GM10248 (cell line): ENCODE measurements at regions of chr11 and their contacts with region 1.

Region 1: DNA sequence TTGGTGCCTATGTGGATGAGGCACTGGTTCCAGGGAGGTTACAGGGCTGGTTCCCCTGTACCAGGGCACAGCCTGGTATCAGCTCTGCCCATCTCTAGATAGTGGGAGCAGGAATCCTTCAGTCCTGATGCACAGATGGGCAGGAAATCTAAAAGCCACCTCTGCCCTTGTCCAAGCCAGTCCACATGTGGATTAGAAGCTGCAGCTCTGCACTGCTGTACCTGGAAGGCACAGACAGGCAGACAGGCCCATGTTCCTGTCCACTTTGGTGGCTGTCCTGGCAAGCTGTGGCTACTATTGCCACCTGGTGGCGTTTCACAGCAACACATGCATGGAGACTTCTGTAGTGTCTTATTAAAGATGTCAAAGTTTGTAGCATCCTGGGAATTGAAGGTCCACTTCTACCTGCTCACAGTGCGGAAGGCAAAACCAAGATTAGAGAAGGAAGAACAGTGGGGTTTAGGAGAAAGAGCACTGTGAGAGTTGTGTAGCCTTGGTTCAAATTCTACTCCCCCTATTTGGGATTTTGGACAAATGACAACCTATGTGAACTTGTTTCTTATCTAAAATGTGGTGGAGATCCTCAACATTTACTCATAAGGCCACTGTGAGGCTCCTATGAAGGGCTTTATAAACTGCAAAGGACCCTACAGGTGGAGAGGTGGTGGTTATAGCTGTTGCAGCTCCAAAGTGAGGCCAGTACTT is 30.1 kb downstream of the NAV2 start:
- DNase-seq: peak; percentile 40
- CTCF ChIP-seq: peak; percentile 82

Region 2: GRCh38 chr11:19546325-19546724 is 196.4 kb before region 1 on chr11:
- CTCF ChIA-PET with region 1: interaction called, 13 read pairs
- POLR2A ChIA-PET with region 1: no interaction called
- DNase-seq: no peak
- CTCF ChIP-seq: no peak

Region 3: GRCh38 chr11:19561011-19561410 is 181.7 kb before region 1 on chr11:
- CTCF ChIA-PET with region 1: interaction called, 118 read pairs
- POLR2A ChIA-PET with region 1: no interaction called
- DNase-seq: no peak
- CTCF ChIP-seq: no peak

Region 4: DNA sequence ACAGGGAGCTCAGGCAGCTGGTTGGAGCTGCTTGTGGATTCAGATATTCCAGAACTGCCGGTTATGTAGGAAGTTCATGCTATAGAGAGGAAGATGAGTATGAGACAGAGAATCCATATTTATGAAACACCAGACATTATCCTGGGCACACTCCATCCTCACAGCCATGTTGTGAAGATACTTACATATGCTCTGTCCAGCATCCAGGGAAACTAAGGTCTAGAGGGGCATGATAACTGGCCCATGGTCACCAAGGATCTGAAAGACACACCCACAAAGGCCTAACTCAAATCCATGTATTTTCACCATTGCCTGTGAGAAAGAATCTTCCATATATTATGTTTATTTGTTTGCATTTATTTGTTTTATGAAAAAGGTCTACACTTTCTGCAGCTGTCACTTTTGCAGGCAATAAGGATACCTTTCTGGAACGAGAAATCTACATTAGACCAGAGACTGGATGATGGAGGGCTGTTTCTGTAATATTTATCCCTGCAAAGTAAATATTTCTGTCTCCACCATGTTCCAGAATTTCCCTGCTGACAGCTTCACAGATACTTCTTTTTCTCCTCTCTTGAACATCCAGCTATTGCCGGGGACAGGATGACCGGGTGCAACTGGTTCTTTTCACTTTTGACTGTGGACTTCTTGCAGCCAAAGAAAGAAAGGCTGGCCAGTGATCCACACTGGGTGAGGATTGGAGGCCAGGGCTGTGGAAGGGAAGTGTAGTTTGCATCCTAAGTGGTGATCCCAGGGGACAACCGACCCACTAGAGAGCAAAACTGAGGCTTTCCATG is 176.0 kb before region 1 on chr11:
- CTCF ChIA-PET with region 1: interaction called, 118 read pairs
- POLR2A ChIA-PET with region 1: no interaction called
- DNase-seq: no peak
- CTCF ChIP-seq: no peak

Region 5: GRCh38 chr11:19577391-19577975 is 165.3 kb before region 1 on chr11:
- CTCF ChIA-PET with region 1: interaction called, 10 read pairs
- POLR2A ChIA-PET with region 1: no interaction called
- DNase-seq: no peak
- CTCF ChIP-seq: no peak

Region 6: DNA sequence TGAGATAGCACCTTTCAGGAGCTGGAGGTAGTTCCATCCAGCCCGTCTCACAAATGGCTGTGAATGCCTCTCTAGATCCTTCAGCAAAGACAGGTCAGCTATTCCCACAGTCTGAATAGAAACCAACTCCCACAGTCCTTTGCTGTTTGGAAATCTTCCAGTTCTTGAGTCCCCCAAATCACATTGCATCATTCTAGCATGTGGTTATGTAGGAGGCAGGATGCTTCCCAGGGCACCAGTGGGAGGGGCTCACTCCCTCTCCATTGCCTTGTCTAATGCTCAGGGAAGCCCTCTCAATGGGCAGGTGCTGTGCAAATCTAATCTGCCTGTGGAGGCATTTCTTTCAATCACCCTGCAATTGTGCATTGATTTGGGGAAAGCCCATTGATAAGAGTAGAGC is 15.5 kb before region 1 on chr11:
- CTCF ChIA-PET with region 1: interaction called, 21 read pairs
- POLR2A ChIA-PET with region 1: no interaction called
- DNase-seq: no peak
- CTCF ChIP-seq: no peak

Region 7: DNA sequence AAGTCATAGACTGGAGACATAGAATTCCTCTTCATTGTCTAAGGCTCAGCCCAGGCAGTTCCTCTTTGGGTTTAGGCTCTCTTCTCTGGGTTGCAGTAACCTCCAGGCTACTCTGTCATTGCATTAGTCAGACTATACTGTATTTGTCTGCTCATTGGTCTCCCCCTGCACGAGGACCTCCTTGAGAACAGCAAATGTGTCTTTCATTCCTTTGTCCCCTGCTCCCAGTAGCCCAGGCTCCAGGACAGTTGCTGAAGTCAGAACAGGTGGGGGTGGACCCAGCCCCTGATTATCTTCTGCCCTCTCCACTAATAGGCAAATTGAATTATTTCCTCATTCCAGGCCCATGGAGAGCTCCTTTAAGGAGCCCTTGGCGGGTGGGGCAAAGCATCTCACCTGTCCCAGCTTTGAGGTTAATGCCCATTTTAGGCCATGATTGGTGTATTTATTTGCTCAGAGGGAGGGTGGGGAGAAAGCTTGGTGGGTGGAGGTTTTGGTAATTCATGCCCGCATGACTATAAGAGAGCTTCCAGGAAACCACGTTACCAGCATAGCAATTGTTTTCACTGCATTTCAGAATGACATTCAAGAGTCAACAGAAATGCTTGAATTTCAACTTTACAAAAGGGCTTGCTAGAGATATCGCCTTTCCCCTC is 10.8 kb after region 1 on chr11:
- CTCF ChIA-PET with region 1: interaction called, 15 read pairs
- POLR2A ChIA-PET with region 1: no interaction called
- DNase-seq: no peak
- CTCF ChIP-seq: no peak